Mammary epithelial cell (primary cell): ENCODE measurements at regions of chr12 and their contacts with region 1.

Region 1: DNA sequence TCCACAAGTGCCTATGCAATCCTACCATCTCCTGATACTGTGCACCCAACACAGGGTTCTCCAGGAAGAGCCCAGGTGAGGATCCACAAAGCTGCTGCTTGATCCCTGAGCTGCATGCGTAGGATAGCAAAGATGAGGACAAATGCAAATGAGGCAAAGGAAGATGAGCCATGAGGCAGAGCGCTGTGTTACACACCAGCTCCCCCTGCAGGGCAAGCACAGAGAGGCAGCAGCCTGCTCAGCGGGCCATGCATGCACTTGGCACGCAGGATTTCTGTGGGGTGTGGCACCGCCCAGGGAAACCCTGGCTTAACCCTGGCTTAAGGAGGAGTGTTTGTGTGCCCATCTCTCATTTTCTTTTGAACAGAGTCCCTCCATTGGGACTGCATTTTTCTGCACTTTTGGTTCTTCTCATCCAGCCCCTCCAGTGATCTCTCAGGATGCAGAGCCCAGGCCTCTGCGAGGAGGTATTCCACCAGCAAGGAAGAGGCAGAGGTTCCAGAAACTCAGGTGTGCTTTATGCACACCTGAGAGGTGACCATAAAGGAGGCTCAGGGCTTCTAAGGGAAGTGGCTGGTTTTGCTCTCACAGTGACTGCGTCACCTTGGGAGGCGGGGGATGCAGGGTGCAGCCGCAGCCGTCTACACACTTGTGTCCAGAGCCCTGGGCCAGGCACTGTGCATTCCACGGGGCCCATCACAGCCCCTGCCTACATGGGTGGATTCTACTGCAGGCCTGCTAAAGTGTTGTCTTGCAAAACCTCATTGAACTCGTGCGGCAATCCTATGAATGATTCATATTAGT is 973.3 kb upstream of the TMEM132C start:
- DNase-seq: peak; percentile 69
- H3K4me3 ChIP-seq: no peak overlapping the region
- H3K27ac ChIP-seq: no peak overlapping the region
- H3K4me1 ChIP-seq: peaks cover 5% of the 10 kb centered on the region
- H3K27me3 ChIP-seq: no peaks in the 10 kb centered on the region
- CTCF ChIP-seq: peak; percentile 98 to 99

Region 2: DNA sequence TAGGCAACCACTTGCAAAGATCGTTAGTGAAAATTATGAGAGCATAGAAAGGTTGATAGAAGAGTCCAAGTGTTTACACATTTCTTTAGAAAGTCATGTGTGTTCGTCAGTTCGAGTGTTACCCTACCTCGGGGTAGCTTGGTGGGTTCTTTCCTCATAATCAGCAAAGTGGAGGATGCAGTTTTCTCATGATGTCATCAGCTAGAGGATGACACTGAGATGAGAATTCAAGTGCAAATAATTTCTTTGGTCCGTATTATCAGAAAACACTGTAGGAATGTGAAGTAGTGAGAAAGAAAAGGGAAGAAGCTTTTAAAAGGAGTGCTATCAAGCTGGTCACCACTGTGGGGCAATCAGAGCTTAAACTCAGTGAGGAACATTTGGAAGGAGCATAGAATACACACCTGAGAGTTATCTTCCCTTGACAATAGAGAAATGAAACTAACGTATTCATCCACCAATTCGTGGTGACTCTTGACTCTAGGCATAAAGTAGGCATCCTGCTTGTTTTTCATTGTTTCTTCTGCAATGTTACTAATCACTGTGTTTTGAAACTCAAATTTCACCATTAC is 367.6 kb before region 1 on chr12:
- CTCF ChIA-PET with region 1: interaction called, 4 read pairs
- dilution Hi-C with region 1: no loop called
- in situ Hi-C with region 1: no loop called
- intact Hi-C with region 1: loop called (anchors 1 kb)
- DNase-seq: peak; percentile 4
- H3K4me3 ChIP-seq: no peak overlapping the region
- H3K27ac ChIP-seq: no peak overlapping the region
- H3K4me1 ChIP-seq: no peaks in the 10 kb centered on the region
- H3K27me3 ChIP-seq: no peaks in the 10 kb centered on the region
- CTCF ChIP-seq: peak in 1 of 2 donors; percentile 44

Region 3: GRCh38 chr12:127025545-127025944 is 268.2 kb before region 1 on chr12:
- CTCF ChIA-PET with region 1: no interaction called
- dilution Hi-C with region 1: no loop called
- in situ Hi-C with region 1: loop called in 1 of 2 experiments (anchors 10 kb)
- intact Hi-C with region 1: loop called (anchors 1 kb)
- DNase-seq: no peak
- H3K4me3 ChIP-seq: no peak overlapping the region
- H3K27ac ChIP-seq: no peak overlapping the region
- H3K4me1 ChIP-seq: no peaks in the 10 kb centered on the region
- H3K27me3 ChIP-seq: no peaks in the 10 kb centered on the region
- CTCF ChIP-seq: peak; percentile 50 to 58

Region 4: DNA sequence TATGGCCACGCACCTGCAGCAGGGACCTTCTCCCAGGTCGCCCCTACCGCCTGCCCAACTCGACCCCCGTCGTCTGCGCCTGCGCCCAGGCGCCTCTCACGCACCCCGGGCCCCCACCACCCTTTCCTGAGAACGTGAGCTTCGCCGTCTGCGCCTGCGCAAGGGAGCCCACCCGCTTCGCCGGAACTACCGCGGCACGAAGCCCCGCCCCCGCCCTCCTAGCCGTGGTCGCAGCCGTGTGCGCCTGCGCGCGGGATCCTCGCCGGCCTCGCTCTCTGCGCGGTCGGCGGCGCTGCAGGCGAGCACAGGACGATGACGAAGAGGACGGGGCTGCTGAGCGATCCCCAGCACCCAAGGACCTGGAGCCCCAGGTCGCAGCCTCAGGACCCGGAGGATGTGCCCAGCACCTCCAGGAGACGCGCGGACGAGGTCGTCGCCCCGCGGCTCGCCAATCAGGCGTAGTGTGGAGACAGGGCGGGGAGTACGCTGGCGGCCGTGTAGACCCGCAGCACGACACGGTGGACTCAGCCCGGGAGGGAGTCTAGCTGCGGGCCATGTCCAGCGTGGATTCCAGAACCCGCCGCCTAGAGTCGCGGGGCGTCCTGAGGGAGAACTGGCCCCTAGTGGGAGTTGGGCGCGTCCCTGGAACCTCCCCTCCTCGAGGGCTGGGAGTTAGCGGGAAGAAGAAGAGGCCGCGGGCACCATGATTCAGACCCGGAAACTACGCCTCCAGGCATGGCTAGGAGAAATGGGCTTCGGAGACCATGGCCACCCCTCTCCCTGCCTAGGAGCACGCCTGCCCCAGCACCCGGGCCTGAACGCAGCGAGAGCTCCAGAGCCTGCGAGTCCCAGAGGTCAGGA is 147.6 kb before region 1 on chr12:
- CTCF ChIA-PET with region 1: no interaction called
- dilution Hi-C with region 1: no loop called
- in situ Hi-C with region 1: no loop called
- intact Hi-C with region 1: loop called (anchors 1 kb)
- DNase-seq: peak; percentile 46
- H3K4me3 ChIP-seq: peak overlapping the region; percentile 6 to 73 (median 55)
- H3K27ac ChIP-seq: peak overlapping the region; percentile 35
- H3K4me1 ChIP-seq: peaks cover 12% of the 10 kb centered on the region
- H3K27me3 ChIP-seq: no peaks in the 10 kb centered on the region
- CTCF ChIP-seq: peak in 1 of 2 donors; percentile 25

Region 5: GRCh38 chr12:127230843-127231260 is 62.9 kb before region 1 on chr12:
- CTCF ChIA-PET with region 1: no interaction called
- dilution Hi-C with region 1: loop called (anchors 5 kb)
- in situ Hi-C with region 1: no loop called
- intact Hi-C with region 1: loop called (anchors 2 kb)
- DNase-seq: peak; percentile 99
- H3K4me3 ChIP-seq: no peak overlapping the region
- H3K27ac ChIP-seq: peak overlapping the region; percentile 88
- H3K4me1 ChIP-seq: peaks cover 35% of the 10 kb centered on the region
- H3K27me3 ChIP-seq: no peaks in the 10 kb centered on the region
- CTCF ChIP-seq: no peak

Region 6: GRCh38 chr12:127355061-127355841 is 61.5 kb after region 1 on chr12:
- CTCF ChIA-PET with region 1: no interaction called
- dilution Hi-C with region 1: no loop called
- in situ Hi-C with region 1: loop called in 1 of 2 experiments (anchors 5 kb)
- intact Hi-C with region 1: loop called (anchors 1 kb)
- DNase-seq: peak; percentile 17
- H3K4me3 ChIP-seq: no peak overlapping the region
- H3K27ac ChIP-seq: no peak overlapping the region
- H3K4me1 ChIP-seq: no peaks in the 10 kb centered on the region
- H3K27me3 ChIP-seq: no peaks in the 10 kb centered on the region
- CTCF ChIP-seq: peak; percentile 87 to 95

Region 7: GRCh38 chr12:127363392-127363791 is 69.7 kb after region 1 on chr12:
- CTCF ChIA-PET with region 1: no interaction called
- dilution Hi-C with region 1: no loop called
- in situ Hi-C with region 1: loop called in 1 of 2 experiments (anchors 5 kb)
- intact Hi-C with region 1: loop called (anchors 1 kb)
- DNase-seq: peak; percentile 31
- H3K4me3 ChIP-seq: no peak overlapping the region
- H3K27ac ChIP-seq: no peak overlapping the region
- H3K4me1 ChIP-seq: no peaks in the 10 kb centered on the region
- H3K27me3 ChIP-seq: no peaks in the 10 kb centered on the region
- CTCF ChIP-seq: peak; percentile 58 to 75